ENCODE measurements at regions of chr12 and their contacts with region 1.

Region 1: GRCh38 chr12:51047655-51048540 is at the start of gene LETMD1:
- DNase-seq: peak; percentile 81 to 96 (median 95)
- ATAC-seq: peak; percentile 97
- H3K4me3 ChIP-seq: peak within 1 kb of the TSS; percentile 75
- H3K4me3 Mint-ChIP-seq: peak within 1 kb of the TSS; percentile 93 to 98 (median 96)
- H3K27ac ChIP-seq: peak within 1 kb of the TSS; percentile 81
- H3K27ac Mint-ChIP-seq: peak within 1 kb of the TSS; percentile 93 to 99 (median 96)
- H3K4me1 ChIP-seq: peaks cover 20 to 23% of the 10 kb centered on the region in 2 donors
- H3K4me1 Mint-ChIP-seq: peaks cover 15 to 44% (median 36%) of the 10 kb centered on the region in 7 donors
- H3K27me3 ChIP-seq: no peaks in the 10 kb centered on the region
- H3K27me3 Mint-ChIP-seq: no peaks in the 10 kb centered on the region
- total RNA-seq, gene LETMD1: 58.8 to 101 (median 77.0) TPM

Region 2: DNA sequence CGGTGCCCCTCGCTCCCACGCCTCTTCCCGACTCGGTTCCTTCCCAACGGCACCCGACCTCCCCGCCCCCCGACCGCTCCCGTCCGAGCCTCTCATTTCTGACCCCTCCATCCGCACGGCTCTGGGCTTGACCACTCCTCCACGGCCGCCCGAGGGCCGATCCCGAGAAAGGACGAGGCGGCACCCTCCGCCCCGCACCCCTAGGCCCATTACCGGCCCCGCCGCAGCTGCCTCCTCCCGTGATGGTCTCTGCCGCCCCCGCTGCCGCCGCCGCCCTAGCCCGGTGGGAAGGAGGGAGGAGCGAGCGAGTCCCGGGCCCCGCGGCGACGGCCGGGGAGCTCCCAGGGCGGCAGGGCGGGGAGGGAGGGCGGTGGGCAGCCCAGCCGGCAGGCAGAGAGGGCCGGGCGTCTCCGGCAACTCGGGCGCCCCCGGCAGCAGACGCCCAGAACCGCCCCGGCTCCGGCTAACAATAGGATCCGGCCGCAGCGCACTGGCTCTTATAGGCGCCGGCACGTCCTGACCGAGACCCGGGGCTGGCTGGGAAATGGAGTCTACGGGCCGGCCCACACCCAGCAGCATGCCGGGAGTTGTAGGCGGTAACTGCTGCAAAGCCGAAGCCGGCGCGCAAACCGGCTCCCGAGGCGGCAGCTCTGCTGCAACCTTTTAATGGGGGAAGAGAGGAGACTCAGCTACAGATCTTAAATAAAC is 35.4 kb after region 1 on chr12 and contains the start of gene CSRNP2:
- CTCF ChIA-PET with region 1: no interaction called
- POLR2A ChIA-PET with region 1: interaction called, 6 read pairs
- intact Hi-C with region 1: loop called (anchors 1 kb)
- DNase-seq: peak; percentile 90 to 95 (median 94)
- ATAC-seq: peak; percentile 100
- H3K4me3 ChIP-seq: peak within 1 kb of the TSS; percentile 78
- H3K4me3 Mint-ChIP-seq: peak within 1 kb of the TSS; percentile 89 to 100 (median 96)
- H3K27ac ChIP-seq: peak within 1 kb of the TSS; percentile 97
- H3K27ac Mint-ChIP-seq: peak within 1 kb of the TSS; percentile 89 to 98 (median 93)
- H3K4me1 ChIP-seq: peaks cover 7% of the 10 kb centered on the region in 2 donors
- H3K4me1 Mint-ChIP-seq: peaks cover 22 to 46% (median 43%) of the 10 kb centered on the region in 7 donors
- H3K27me3 ChIP-seq: no peaks in the 10 kb centered on the region
- H3K27me3 Mint-ChIP-seq: no peaks in the 10 kb centered on the region
- total RNA-seq, gene CSRNP2: 20.0 to 38.7 (median 23.4) TPM

Region 3: GRCh38 chr12:51217968-51218606 is 170.2 kb after region 1 on chr12 and contains the start of gene POU6F1:
- CTCF ChIA-PET with region 1: no interaction called
- POLR2A ChIA-PET with region 1: interaction called, 4 read pairs
- intact Hi-C with region 1: loop called (anchors 1 to 5 kb)
- DNase-seq: peak; percentile 64 to 81 (median 76)
- ATAC-seq: peak; percentile 88
- H3K4me3 ChIP-seq: peak within 1 kb of the TSS; percentile 90
- H3K4me3 Mint-ChIP-seq: peak within 1 kb of the TSS; percentile 82 to 98 (median 95)
- H3K27ac ChIP-seq: peak within 1 kb of the TSS; percentile 98
- H3K27ac Mint-ChIP-seq: peak within 1 kb of the TSS; percentile 83 to 98 (median 96)
- H3K4me1 ChIP-seq: peaks cover 10% of the 10 kb centered on the region in 2 donors
- H3K4me1 Mint-ChIP-seq: peaks cover 13 to 43% (median 33%) of the 10 kb centered on the region in 7 donors
- H3K27me3 ChIP-seq: no peaks in the 10 kb centered on the region
- H3K27me3 Mint-ChIP-seq: no peaks in the 10 kb centered on the region
- total RNA-seq, gene POU6F1: 5.1 to 85.5 (median 33.5) TPM

Region 4: GRCh38 chr12:51270067-51270970 is 222.4 kb after region 1 on chr12 and contains the start of gene SMAGP:
- CTCF ChIA-PET with region 1: no interaction called
- POLR2A ChIA-PET with region 1: interaction called, 3 read pairs
- intact Hi-C with region 1: loop called (anchors 1 kb)
- DNase-seq: peak; percentile 13 to 62 (median 36)
- ATAC-seq: peak; percentile 68
- H3K4me3 ChIP-seq: peak within 1 kb of the TSS; percentile 57
- H3K4me3 Mint-ChIP-seq: peak within 1 kb of the TSS; percentile 90 to 98 (median 94)
- H3K27ac ChIP-seq: peak within 1 kb of the TSS; percentile 62
- H3K27ac Mint-ChIP-seq: peak within 1 kb of the TSS; percentile 55 to 96 (median 90)
- H3K4me1 ChIP-seq: peaks cover 5 to 20% of the 10 kb centered on the region in 2 donors
- H3K4me1 Mint-ChIP-seq: peaks cover 19 to 29% (median 24%) of the 10 kb centered on the region in 7 donors
- H3K27me3 ChIP-seq: no peaks in the 10 kb centered on the region
- H3K27me3 Mint-ChIP-seq: peaks cover 0 to 34% (median 0%) of the 10 kb centered on the region in 5 donors
- total RNA-seq, gene SMAGP: 1.5 to 7.4 (median 4.2) TPM

Region 5: DNA sequence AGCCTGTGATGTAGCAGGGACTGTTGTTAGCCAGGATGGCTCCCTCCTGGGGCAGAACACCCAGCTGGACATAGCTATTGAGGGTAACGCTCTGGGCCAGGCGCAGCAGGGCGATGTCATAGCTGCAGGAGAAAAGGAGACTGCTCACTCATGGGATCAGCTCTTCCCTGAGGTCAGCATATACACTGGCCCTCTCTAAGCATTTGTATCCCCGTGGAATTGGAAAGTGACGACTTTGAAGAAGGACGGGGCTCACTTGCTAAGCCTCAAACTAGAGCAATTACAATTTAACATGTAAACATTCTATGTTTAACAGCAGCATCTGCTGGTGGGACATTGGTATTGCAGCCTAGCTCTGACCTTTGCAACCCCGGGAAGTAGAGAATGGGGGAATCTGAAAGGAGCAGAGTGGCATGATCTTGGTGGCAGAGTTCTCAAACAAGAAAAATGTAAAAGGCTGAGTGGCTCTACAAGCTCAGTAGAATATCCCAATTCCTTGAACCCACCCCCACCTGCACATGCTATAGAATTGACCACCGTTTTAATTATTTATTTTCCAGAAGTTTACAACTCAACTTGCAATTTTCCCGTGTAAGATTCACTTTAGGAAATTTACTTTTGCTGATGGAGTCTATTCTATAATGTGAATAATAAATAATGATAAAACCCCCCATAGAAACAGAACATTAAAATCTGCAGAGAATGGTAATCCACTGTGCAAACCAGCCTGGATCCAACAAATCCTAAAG is 293.5 kb after region 1 on chr12:
- CTCF ChIA-PET with region 1: interaction called, 3 read pairs
- POLR2A ChIA-PET with region 1: interaction called, 3 read pairs
- intact Hi-C with region 1: loop called (anchors 1 kb)
- DNase-seq: peak; percentile 36 to 79 (median 69)
- ATAC-seq: peak; percentile 96
- H3K4me3 ChIP-seq: peak overlapping the region; percentile 6
- H3K4me3 Mint-ChIP-seq: peak overlapping the region; percentile 41 to 84 (median 65)
- H3K27ac ChIP-seq: peak overlapping the region; percentile 39
- H3K27ac Mint-ChIP-seq: peak overlapping the region; percentile 38 to 92 (median 84)
- H3K4me1 ChIP-seq: peaks cover 4 to 8% of the 10 kb centered on the region in 2 donors
- H3K4me1 Mint-ChIP-seq: peaks cover 14 to 26% (median 16%) of the 10 kb centered on the region in 7 donors
- H3K27me3 ChIP-seq: no peaks in the 10 kb centered on the region
- H3K27me3 Mint-ChIP-seq: no peaks in the 10 kb centered on the region

Region 6: DNA sequence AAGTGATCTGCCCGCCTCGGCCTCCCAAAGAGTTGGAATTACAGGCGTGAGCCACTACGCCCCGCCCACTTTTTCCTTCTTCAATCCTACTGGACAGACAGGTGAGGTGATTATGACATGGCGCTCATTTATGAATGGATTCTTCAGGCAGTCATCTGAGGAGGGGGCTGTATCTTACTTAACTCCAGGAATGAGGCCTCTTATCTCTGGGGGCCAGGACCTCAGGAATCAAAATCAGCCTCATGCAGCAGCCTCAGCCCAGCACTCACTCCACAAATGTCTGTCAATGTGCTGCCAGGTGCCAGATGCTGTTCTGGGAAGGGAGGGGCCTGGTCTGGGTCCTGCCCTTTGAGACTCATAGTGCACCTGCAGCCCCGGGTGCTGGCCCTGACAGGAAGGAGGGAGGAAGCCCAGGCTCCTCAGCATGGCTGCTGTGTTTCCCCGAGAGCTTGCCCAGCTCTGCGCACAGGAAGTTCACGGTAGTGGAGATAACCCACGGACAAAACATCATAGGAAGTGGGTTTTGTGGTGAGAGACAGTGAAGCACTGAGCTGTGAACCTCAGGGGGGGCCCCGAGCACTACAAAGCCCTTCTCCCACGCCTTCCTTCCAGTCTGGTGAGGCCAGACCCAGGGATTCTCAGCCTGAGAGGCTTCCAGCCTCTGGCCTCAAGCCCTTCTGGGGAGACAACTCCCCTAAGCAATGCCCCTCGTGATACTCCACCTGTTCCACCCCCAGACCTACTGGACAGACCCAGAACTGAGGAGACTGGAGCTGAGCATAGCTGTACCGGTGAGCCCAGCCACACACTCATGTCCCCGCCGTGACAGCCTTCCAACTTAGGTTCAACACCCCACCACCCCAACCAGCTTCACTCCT is 321.0 kb after region 1 on chr12:
- CTCF ChIA-PET with region 1: no interaction called
- POLR2A ChIA-PET with region 1: no interaction called
- intact Hi-C with region 1: loop called in 1 of 2 experiments (anchors 1 kb)
- DNase-seq: peak; percentile 53 to 96 (median 95)
- ATAC-seq: peak; percentile 96
- H3K4me3 ChIP-seq: peak overlapping the region; percentile 57
- H3K4me3 Mint-ChIP-seq: peak overlapping the region; percentile 62 to 89 (median 80)
- H3K27ac ChIP-seq: peak overlapping the region; percentile 73
- H3K27ac Mint-ChIP-seq: peak overlapping the region; percentile 6 to 96 (median 91)
- H3K4me1 ChIP-seq: peaks cover 24 to 35% of the 10 kb centered on the region in 2 donors
- H3K4me1 Mint-ChIP-seq: peaks cover 38 to 72% (median 54%) of the 10 kb centered on the region in 7 donors
- H3K27me3 ChIP-seq: no peaks in the 10 kb centered on the region
- H3K27me3 Mint-ChIP-seq: peaks cover 0 to 5% (median 0%) of the 10 kb centered on the region in 5 donors

Measured in naive thymus-derived CD4-positive, alpha-beta T cell (primary cell).